HEK293T (cell line): ENCODE measurements at regions of chr1 and their contacts with region 1.

Region 1: DNA sequence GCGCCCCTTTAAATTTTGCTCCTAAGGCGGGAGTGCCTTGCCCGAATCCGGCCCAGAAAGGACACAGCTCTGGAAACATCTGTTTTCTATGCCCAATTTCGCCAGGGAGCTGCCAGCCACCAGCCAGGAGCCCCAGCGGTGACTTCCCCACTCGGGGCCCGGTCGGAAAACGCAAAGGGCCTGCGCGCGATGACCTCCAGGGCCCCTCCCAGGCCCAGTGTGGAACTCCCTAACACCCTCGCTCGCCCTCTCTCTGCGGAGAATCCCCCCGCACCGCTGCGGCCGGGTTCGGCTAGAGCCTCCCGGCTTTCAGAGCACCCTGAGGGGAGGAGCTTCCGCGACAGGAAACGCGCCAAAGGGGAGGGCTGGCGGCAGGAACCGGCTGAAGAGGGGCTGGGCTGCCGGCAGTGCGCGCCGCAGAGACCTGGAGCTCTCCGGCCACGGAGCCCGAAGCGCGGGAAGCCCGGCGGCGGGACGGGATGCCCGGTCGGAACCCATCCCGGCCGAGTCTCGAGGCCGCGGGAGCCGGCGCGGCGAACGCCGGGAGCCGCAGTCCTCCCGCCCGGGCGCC is 505 bp downstream of the CLSPN start:
- DNase-seq: peak; percentile 87

Region 2: GRCh38 chr1:35557292-35558063 is 211.8 kb before region 1 on chr1 and contains the starts of genes KIAA0319L and NCDN:
- CTCF ChIA-PET with region 1: no interaction called
- POLR2A ChIA-PET with region 1: interaction called, 14 read pairs
- DNase-seq: peak; percentile 93

Region 3: GRCh38 chr1:35715568-35716002 is 53.7 kb before region 1 on chr1:
- CTCF ChIA-PET with region 1: interaction called, 7 read pairs
- POLR2A ChIA-PET with region 1: interaction called, 10 read pairs
- DNase-seq: peak; percentile 85

Region 4: DNA sequence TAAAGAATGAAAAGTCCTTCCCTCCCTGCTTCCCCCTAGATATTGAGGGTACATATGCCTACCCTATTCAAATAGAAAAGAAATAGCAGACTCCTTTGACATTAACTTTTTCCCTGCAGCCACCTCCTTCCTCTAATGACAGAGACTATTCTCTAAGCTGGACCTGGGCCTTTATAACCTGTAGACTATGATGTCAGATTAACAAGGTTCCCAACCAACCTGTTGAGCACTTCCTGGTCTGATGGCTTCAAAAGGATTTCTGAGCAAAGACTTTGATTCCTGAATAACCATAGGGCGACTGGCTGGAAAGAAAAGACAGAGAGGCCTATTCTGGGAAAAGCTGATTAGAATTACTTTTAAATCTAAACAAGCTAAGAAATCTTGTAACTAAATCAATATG is 32.2 kb before region 1 on chr1:
- CTCF ChIA-PET with region 1: no interaction called
- POLR2A ChIA-PET with region 1: interaction called, 19 read pairs
- DNase-seq: no peak

Region 5: DNA sequence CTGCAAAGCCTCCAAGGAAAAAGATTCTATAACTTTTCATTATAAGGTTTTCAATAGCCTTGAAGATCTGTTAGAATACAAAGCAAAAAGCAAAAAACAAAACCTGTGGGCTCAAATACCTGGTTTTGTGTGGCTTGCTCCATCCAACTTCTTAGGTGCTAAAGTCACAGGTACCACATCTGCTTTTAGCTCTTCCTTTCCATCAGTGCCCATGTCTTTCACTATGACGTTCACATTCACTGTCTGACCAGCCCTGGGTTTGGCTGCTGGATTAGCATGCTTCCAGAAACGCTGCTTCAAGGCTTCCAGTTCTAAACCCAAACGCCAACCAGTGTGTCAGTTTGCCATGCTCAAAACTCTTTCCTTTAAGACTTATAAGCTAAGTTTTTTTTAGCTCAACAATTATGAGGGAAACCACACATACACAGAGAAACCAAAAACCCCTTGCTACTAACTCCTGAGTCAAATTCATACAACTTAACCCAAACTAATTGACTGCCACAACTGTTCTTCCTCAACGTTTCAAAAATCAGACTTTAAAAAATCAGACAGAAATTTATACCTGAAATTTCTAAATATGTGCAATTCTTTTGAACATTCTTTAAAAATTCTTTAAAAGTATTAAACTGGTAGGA is 15.5 kb before region 1 on chr1:
- CTCF ChIA-PET with region 1: no interaction called
- POLR2A ChIA-PET with region 1: interaction called, 42 read pairs
- DNase-seq: no peak

Region 6: GRCh38 chr1:35851132-35851869 is 82.0 kb after region 1 on chr1:
- CTCF ChIA-PET with region 1: no interaction called
- POLR2A ChIA-PET with region 1: no interaction called
- DNase-seq: no peak